ENCODE measurements at regions of chr1 and their contacts with region 1.

Region 1: GRCh38 chr1:216502528-216503162 is 79.4 kb upstream of the USH2A start:
- DNase-seq: no peak
- H3K4me3 Mint-ChIP-seq: no peak overlapping the region
- H3K27ac Mint-ChIP-seq: no peak overlapping the region
- H3K4me1 Mint-ChIP-seq: no peaks in the 10 kb centered on the region
- H3K27me3 Mint-ChIP-seq: no peaks in the 10 kb centered on the region

Region 2: DNA sequence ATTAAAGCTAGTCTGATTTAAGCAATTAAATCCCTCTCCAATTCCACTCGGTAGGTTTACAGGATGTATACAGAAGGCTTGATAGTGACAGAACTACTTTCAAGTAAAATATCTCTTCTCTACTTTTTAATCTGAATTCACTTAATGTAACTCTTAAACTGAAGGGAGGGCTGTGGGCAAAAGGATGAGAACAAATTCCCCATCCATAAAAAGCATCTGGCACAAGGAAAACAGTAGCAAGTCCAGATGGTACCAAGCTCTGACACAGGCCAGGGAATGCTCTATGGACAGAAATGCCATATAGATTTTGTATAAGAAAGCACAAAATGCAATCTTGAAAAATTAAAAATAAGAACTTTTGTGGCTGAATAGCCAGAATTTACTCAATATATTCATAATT is 26.3 kb before region 1 on chr1:
- intact Hi-C with region 1: loop called (anchors 1 kb)
- DNase-seq: no peak
- H3K4me3 Mint-ChIP-seq: no peak overlapping the region
- H3K27ac Mint-ChIP-seq: no peak overlapping the region
- H3K4me1 Mint-ChIP-seq: no peaks in the 10 kb centered on the region
- H3K27me3 Mint-ChIP-seq: no peaks in the 10 kb centered on the region

Region 3: DNA sequence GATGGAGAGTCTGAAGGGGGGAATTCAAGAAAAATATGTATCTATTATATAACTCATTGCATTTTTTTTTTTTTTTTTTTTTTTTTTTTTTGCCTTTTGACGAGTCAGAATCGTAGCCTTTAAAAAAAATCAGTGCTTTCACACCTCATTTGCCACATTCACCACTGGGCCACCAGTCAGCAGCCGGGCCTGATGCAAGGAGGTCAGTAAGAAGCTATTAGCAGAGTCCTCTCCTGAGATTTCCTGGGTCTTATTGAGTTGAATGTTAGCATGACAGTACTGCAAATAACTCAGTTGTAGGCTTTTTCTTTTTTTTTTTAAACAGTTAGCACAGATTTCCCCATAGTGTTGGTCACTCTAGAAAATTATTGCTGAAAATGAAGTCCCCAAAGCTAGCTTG is 1268.3 kb after region 1 on chr1:
- intact Hi-C with region 1: no loop called
- DNase-seq: no peak
- H3K4me3 Mint-ChIP-seq: no peak overlapping the region
- H3K27ac Mint-ChIP-seq: no peak overlapping the region
- H3K4me1 Mint-ChIP-seq: no peaks in the 10 kb centered on the region
- H3K27me3 Mint-ChIP-seq: no peaks in the 10 kb centered on the region